SK-N-SH (cell line): ENCODE measurements at regions of chr4 and their contacts with region 1.

Region 1: DNA sequence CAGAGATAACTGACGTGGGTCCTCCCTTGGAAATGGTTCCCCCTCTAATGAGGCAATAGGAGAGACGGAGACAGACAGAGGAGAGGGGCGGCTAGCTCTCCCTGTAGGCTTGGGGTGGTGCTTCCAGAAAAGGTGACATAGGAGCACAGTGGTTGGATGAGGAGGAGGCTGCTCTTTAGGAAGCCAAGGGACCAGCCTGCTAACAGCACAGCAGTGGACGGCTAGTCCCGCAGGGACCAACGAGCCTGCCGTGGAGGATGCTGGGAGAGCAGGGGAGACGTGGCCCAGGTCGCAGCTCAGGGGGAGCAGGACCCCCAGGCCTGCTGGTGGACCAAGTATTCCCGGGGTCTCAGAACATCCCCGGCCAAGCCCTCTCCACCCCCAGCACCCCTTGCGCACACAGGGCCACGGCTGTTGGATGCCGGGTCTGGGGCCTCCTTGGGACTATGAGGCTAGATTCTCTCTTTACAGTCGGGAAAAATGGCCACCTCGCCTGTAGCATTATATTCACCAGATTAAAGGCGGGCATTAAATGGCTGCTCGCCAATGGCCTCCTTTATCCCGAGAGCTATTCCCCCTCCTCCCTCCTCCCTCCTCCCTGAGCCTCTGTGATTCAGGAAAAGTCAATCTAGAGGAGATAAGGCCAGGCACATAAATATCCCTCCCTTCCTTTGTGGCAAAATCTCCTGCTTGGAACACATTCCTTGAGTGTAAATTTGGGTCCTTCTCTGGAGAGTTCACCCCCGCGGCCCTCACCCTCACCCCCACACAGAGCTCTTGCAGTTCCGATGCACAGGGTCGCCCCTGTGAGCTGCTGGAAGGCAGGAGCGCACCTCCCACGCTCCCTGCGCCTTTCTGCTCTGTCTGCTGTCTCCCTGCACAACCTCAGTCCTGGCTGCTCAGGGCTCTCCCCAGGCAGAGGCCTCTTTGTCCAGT is 30.5 kb upstream of the NSG1 start:
- DNase-seq: no peak
- H3K4me3 ChIP-seq: no peak overlapping the region
- H3K27ac ChIP-seq: no peak overlapping the region
- H3K4me1 ChIP-seq: no peaks in the 10 kb centered on the region
- H3K27me3 ChIP-seq: peaks cover 5% of the 10 kb centered on the region; the same call in 1 of the 2 replicates
- CTCF ChIP-seq: no peak
- EP300 ChIP-seq: no peak
- RAD21 ChIP-seq: no peak

Region 2: DNA sequence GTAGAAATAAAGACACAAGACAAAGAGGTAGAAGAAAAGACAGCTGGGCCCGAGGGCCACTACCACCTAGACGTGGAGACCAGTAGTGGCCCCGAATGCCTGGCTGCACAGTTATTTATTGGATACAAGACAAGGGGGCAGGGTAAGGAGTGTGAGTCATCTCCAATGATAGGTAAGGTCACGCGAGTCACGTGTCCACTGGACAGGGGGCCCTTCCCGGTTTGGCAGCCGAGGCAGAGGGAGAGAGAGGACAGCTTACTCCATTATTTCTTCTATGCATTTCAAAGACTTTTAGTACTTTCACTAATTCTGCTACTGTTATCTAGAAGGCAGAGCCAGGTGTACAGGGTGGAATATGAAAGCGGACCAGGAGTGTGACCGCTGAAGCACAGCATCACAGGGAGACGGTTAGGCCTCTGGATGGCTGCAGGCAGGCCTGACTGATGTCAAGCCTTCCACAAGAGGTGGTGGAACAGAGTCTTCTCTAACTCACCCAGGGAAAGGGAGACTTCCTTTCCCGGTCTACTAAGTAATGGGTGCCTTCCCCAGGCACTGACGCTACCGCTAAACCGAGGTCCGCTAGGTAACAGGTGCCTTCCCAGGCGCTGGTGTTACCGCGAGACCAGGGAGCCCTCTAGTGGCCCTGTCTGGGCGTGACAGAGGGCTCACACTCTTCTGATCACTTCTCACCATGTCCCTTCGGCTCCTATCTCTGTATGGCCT is 21.4 kb before region 1 on chr4:
- CTCF ChIA-PET with region 1: interaction called, 10 read pairs
- POLR2A ChIA-PET with region 1: no interaction called
- DNase-seq: peak; percentile 66
- H3K4me3 ChIP-seq: no peak overlapping the region
- H3K27ac ChIP-seq: no peak overlapping the region
- H3K4me1 ChIP-seq: no peaks in the 10 kb centered on the region; a peak in 1 of 4 replicates
- H3K27me3 ChIP-seq: no peaks in the 10 kb centered on the region; the same call in 1 of the 2 replicates
- CTCF ChIP-seq: peak; percentile 65
- EP300 ChIP-seq: no peak
- RAD21 ChIP-seq: peak; percentile 77